ENCODE measurements at regions of chr21 and their contacts with region 1.

Region 1: DNA sequence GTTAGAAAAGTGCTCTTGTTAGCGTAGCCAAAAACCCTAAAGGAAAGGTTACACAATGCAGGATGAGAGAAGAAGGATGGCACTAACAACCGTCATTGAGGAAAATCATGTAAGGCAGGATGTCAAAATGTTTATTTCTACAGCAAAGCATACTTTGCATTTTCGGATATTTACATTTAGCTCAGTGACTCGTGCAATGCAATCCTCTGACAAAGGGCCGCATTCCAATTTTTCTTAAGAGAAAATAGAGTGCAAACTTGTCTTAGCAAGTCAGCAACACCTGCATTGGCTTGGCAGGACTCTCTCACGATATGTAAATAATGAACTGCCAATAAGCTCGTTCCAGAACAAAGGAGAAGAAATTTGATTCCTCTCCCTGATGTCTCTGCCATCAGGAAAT is 33.3 kb downstream of the TIAM1 start:
- DNase-seq: no peak
- H3K4me3 ChIP-seq: no peak overlapping the region
- H3K4me3 Mint-ChIP-seq: no peak overlapping the region
- H3K27ac ChIP-seq: no peak overlapping the region
- H3K27ac Mint-ChIP-seq: no peak overlapping the region
- H3K4me1 ChIP-seq: no peaks in the 10 kb centered on the region
- H3K4me1 Mint-ChIP-seq: no peaks in the 10 kb centered on the region
- H3K27me3 ChIP-seq: no peaks in the 10 kb centered on the region
- H3K27me3 Mint-ChIP-seq: peaks cover 0 to 4% (median 0%) of the 10 kb centered on the region in 3 donors
- CTCF ChIP-seq: no peak

Region 2: GRCh38 chr21:31043471-31043870 is 267.3 kb before region 1 on chr21:
- intact Hi-C with region 1: no loop called
- DNase-seq: no peak
- H3K4me3 ChIP-seq: no peak overlapping the region
- H3K4me3 Mint-ChIP-seq: no peak overlapping the region
- H3K27ac ChIP-seq: no peak overlapping the region
- H3K27ac Mint-ChIP-seq: no peak overlapping the region
- H3K4me1 ChIP-seq: no peaks in the 10 kb centered on the region
- H3K4me1 Mint-ChIP-seq: no peaks in the 10 kb centered on the region
- H3K27me3 ChIP-seq: no peaks in the 10 kb centered on the region
- H3K27me3 Mint-ChIP-seq: peaks cover 2 to 8% (median 3%) of the 10 kb centered on the region in 3 donors
- CTCF ChIP-seq: no peak

Region 3: DNA sequence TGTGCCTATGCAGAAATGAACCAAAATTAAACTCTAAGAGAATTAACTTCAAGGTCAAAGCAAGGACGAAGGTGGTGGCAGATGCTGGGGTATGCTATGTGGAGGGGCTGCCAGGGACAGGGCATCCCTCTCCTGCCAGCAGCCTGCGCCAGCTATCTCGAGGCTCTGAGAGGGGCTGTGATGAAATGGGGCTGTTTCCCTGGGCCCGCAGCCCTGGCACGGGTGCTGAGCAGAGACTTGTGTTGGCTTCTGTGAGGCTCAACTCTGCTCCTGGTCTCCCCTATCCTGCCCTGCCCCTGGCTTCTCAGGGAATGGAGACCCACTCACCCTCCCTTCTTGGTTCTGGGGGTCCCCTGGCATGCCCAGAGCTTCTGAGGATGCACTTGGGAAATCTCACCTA is 75.3 kb after region 1 on chr21:
- intact Hi-C with region 1: loop called in 1 of 2 experiments (anchors 2 kb)
- DNase-seq: no peak
- H3K4me3 ChIP-seq: no peak overlapping the region
- H3K4me3 Mint-ChIP-seq: no peak overlapping the region
- H3K27ac ChIP-seq: no peak overlapping the region
- H3K27ac Mint-ChIP-seq: no peak overlapping the region
- H3K4me1 ChIP-seq: no peaks in the 10 kb centered on the region
- H3K4me1 Mint-ChIP-seq: no peaks in the 10 kb centered on the region
- H3K27me3 ChIP-seq: no peaks in the 10 kb centered on the region
- H3K27me3 Mint-ChIP-seq: peaks cover 4 to 11% (median 10%) of the 10 kb centered on the region in 3 donors
- CTCF ChIP-seq: no peak